Cardiac septum (tissue), 1 donor: ENCODE measurements at regions of chr16 and their contacts with region 1.

Region 1: DNA sequence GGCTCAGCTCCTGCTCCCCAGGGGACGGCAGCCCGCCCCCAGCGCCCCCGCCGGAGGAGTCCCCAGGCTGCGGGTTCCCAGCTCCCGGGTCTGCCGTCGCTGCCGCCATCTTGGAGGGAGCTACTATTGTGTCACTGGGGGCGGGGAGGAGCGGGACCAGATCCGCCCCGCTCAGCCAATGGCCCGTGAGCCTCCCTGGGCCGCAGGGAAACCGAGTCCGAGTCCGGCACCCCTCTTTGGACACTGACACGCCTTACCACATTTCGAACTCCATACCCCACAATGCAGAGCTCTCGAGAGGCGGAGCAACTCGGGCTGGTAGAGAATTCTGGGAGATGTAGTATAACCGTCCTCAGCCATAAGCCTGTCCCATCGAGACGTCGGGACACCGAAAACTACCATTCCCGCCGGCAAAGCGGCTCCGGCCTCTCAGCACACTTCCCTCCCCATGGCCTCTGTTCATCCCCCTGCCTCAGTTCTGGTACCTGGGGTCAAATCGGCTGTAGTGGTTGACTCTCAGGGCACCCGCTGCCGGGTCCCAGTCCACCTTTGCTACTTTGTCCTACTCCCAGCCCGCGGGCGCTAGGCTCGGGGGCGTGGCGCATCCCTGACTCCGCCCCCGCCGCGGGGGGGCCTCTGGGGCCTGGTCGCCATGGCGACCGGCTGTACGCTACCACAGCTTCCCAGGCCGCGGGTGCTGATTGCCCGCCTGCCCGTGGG is at the starts of genes RANBP10 and TSNAXIP1:
- DNase-seq: peak; percentile 98
- total RNA-seq, gene RANBP10: 16.4 TPM
- total RNA-seq, gene TSNAXIP1: 0.51 TPM

Region 2: GRCh38 chr16:67653128-67653786 is 153.3 kb before region 1 on chr16:
- intact Hi-C with region 1: no loop called
- DNase-seq: no peak

Region 3: GRCh38 chr16:67719048-67719777 is 87.4 kb before region 1 on chr16 and contains the start of gene GFOD2:
- intact Hi-C with region 1: loop called (anchors 5 kb)
- DNase-seq: peak; percentile 99
- total RNA-seq, gene GFOD2: 10.7 TPM

Region 4: DNA sequence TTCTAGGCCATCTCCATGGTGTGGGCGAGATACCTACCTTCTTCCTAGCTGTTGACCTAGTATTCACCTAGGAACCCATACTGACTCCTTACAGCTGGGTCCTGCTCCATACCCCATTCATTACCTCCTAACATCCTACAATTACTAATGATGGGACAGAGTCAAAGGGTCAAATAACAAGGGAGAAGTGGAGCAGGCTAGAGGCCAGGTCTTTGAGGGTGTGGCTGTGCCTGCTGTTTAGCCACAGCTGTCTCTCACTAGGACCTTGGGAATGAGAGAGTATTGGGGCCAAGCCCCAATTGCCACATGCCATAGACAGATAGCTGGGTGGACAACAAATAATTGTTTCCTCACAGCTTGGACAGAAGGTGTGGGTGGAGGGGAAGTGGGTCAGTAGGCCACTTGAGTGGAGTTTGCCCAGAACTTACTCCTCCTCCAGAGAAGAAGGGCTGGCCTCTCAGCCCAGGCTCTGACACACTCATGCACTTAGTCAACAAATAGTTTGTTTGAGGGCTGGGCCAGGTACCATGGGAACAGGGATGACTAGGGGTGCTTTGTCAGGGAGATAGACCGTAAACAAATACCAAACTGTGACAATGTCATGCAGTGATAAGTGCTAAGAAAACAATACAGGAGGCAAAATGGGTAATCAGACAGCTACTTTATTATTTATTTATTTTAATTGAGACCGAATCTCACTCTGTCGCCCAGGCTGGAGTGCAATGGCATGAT is 51.1 kb after region 1 on chr16:
- intact Hi-C with region 1: no loop called
- DNase-seq: peak; percentile 79

Region 5: DNA sequence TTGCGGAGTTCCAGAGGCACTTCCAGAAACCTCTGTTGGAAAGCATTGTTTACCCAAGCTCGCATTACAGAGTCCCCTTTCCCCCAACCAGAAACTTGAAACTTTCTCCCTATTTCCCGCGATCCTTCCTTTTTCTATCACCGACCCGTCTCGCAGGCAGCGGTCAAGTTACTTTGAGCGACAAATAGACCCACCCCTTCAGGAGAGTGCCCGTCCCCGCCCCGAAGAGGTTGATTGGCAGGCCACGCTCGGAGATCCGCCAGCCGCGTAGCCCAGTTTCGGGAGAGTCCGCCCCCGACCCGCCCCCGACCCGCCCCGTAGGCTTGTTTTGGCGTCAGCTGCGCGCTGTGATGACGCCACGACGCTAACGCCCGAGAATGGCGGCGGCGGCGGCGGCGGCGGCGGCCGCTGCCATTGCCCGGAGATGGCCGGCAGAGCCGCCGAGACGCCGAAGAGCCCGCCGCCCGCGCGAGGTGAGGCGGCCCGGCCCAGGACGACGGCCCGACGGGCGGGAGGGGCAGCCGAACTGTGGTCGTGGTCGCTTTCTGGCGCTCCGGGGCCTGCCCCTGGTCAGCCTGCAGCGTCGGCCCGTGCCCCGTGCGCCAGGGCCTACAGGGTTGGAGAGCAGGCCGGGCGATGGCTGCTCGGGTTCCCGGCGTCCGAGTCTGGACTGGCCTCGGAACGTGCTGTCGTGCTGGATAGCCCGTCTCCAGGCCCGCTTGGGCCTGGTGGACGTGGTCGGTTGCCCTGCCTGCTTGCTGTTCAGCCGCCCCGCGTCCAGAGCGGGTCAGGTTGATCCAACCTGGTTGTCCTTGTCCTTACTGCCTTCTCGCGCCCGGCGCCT is 86.5 kb after region 1 on chr16 and contains the start of gene PSKH1:
- intact Hi-C with region 1: no loop called
- DNase-seq: peak; percentile 99
- total RNA-seq, gene PSKH1: 22.6 TPM

Region 6: GRCh38 chr16:67907397-67908180 is 101.0 kb after region 1 on chr16:
- intact Hi-C with region 1: no loop called
- DNase-seq: no peak